WTC11 (cell line): ENCODE measurements at regions of chr6 and their contacts with region 1.

Region 1: DNA sequence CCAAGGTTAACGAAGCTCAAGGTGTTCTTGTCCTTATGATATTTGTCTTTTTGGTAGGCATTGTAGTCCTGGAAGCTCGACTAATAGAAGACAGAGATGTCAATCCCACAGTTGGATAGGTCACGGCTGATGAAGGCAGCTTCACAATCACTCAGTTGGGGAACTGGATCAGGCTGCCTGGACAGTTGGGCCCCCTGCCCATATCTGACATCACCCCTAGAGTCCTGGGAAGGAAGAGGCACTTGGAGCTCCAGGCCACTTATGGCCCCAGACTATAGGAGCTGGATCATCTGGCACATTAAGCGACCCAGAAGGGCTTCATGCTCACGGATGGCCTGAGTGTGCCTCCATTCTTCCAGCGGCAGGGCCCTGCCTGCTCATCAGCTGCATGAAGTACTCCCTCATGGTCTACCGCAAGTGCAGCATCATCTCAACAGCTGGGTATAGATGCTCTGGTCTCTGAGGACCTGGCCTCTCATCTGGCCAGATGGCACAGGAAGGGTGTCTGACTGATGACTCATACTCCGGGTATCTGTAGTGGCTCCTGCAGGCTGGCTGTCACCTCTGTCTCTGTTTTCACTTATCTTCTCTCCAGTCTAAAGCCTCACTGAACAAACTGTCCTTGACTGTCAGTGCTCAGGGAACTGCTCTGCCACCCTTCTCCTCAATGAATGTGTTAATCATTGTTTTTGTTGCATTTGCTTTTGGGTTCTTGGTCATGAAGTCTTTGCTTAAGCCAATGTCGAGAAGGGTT is 29.2 kb upstream of the SSR1 start:
- DNase-seq: no peak
- ATAC-seq: no peak
- H3K4me3 Mint-ChIP-seq: no peak overlapping the region
- H3K27ac Mint-ChIP-seq: no peak overlapping the region
- H3K4me1 Mint-ChIP-seq: peaks cover 6% of the 10 kb centered on the region
- H3K27me3 Mint-ChIP-seq: no peaks in the 10 kb centered on the region
- CTCF ChIP-seq: no peak

Region 2: GRCh38 chr6:7328243-7328642 is 13.9 kb before region 1 on chr6:
- CTCF ChIA-PET with region 1: interaction called, 15 read pairs
- POLR2A ChIA-PET with region 1: no interaction called
- DNase-seq: no peak
- ATAC-seq: no peak
- H3K4me3 Mint-ChIP-seq: no peak overlapping the region
- H3K27ac Mint-ChIP-seq: no peak overlapping the region
- H3K4me1 Mint-ChIP-seq: no peaks in the 10 kb centered on the region
- H3K27me3 Mint-ChIP-seq: no peaks in the 10 kb centered on the region
- CTCF ChIP-seq: no peak

Region 3: GRCh38 chr6:7373739-7374138 is 31.6 kb after region 1 on chr6:
- CTCF ChIA-PET with region 1: no interaction called
- POLR2A ChIA-PET with region 1: no interaction called
- DNase-seq: no peak
- ATAC-seq: no peak
- H3K4me3 Mint-ChIP-seq: no peak overlapping the region
- H3K27ac Mint-ChIP-seq: no peak overlapping the region
- H3K4me1 Mint-ChIP-seq: 0 out of 2 replicates have a peak, but pooled peaks cover 2% of the 10 kb centered on the region
- H3K27me3 Mint-ChIP-seq: no peaks in the 10 kb centered on the region
- CTCF ChIP-seq: no peak